Spleen (tissue), 13 donors: ENCODE measurements at regions of chr21 and their contacts with region 1.

Region 1: GRCh38 chr21:44801468-44802395 is at the start of gene UBE2G2:
- DNase-seq: peak; percentile 96
- H3K4me3 ChIP-seq: peak within 1 kb of the TSS; percentile 98 to 100 (median 100)
- H3K27ac ChIP-seq: peak within 1 kb of the TSS; percentile 67 to 87 (median 76)
- H3K4me1 ChIP-seq: peaks cover 23 to 77% (median 41%) of the 10 kb centered on the region in 6 donors
- H3K27me3 ChIP-seq: no peaks in the 10 kb centered on the region
- CTCF ChIP-seq: peak in 1 of 11 experiments; percentile 12
- POLR2A ChIP-seq: no peak
- total RNA-seq, gene UBE2G2: 81.1 to 125 (median 93.8) TPM

Region 2: GRCh38 chr21:44854664-44855446 is 53.1 kb after region 1 on chr21:
- intact Hi-C with region 1: no loop called
- DNase-seq: no peak
- H3K4me3 ChIP-seq: no peak overlapping the region
- H3K27ac ChIP-seq: peak overlapping the region in 1 of 8 donors; percentile 55
- H3K4me1 ChIP-seq: peaks cover 0 to 93% (median 28%) of the 10 kb centered on the region in 6 donors
- H3K27me3 ChIP-seq: no peaks in the 10 kb centered on the region
- CTCF ChIP-seq: no peak
- POLR2A ChIP-seq: no peak

Region 3: DNA sequence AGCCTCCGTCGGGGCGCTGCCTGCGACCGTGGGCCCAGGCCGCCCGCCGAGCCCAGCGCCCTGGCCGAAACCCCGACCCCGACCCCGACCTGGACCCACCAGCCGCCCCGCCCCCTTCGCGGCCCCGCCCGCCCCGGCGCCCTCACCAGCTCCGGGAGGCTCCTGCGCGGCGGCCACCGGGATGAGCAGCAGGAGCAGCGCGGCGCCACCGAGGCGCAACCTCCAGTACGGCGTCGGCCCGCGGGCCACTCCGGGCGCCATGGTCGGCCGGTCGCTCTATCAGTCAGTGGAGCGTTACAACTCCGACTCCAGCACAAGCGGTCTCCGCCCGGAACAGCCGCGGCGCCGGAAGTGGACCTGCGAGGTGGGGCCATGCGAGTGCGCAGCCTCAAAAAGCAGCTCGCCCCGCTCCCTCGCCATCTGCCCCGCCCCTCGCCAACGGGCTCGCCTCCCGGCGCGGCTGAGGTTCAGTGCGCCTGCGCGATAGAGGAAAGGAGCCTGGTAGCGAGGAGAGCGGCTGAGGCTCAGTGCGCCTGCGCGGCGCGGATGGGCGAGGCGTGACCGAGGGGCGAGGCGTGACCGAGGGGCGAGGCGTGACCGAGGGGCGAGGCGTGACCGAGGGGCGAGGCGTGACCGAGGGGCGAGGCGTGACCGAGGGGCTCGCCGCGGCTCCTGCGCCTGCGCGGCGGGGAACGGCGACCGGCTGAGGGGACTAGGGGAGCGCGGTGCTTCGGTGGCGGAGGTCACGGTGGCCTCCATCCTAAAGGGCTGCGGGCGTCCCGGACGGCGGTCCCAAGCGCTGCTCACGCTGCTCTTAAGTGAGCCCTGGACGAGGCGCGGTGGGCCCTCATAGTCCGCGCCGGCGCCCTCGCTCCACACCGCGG is 71.9 kb after region 1 on chr21 and contains the start of gene PTTG1IP:
- intact Hi-C with region 1: loop called (anchors 5 kb)
- DNase-seq: peak; percentile 100
- H3K4me3 ChIP-seq: peak within 1 kb of the TSS; percentile 69 to 98 (median 90)
- H3K27ac ChIP-seq: peak within 1 kb of the TSS; percentile 95 to 100 (median 97)
- H3K4me1 ChIP-seq: peaks cover 51 to 91% (median 73%) of the 10 kb centered on the region in 6 donors
- H3K27me3 ChIP-seq: no peaks in the 10 kb centered on the region
- CTCF ChIP-seq: peak in 1 of 11 experiments; percentile 32
- POLR2A ChIP-seq: peak in 2 of 3 donors; percentile 33 to 73
- total RNA-seq, gene PTTG1IP: 121 to 189 (median 165) TPM

Region 4: GRCh38 chr21:44927587-44928461 is 126.1 kb after region 1 on chr21:
- intact Hi-C with region 1: loop called (anchors 10 kb)
- DNase-seq: peak; percentile 96
- H3K4me3 ChIP-seq: peak overlapping the region in 7 of 8 donors; percentile 27 to 86 (median 45)
- H3K27ac ChIP-seq: peak overlapping the region; percentile 85 to 97 (median 90)
- H3K4me1 ChIP-seq: peaks cover 44 to 100% (median 94%) of the 10 kb centered on the region in 6 donors
- H3K27me3 ChIP-seq: peaks cover 0 to 14% (median 0%) of the 10 kb centered on the region in 7 donors
- CTCF ChIP-seq: no peak
- POLR2A ChIP-seq: no peak